BJ (cell line): ENCODE measurements at regions of chr11 and their contacts with region 1.

Region 1: DNA sequence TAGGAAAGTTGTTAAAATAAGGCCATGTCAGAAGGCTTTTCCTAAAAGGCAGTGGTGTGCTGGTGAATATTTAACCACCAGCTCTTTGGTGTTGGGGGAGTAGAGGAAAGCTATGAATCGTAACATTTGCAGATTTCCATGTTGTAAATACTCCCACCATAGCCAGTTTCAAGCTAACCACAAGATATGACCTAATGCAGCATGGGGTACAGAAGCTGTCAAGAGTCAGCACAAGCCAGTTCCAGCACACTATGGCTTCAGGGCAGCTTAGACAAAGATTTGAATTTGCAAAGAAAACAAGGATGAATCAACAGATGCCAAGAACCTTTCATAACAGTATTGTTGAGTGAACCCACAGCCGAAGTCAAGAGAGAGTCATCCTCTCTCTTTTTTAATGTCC is 40.0 kb downstream of the COMMD9 start:
- DNase-seq: peak; percentile 64
- H3K4me3 ChIP-seq: no peak overlapping the region
- H3K27me3 ChIP-seq: peaks cover 14% of the 10 kb centered on the region
- CTCF ChIP-seq: no peak

Region 2: DNA sequence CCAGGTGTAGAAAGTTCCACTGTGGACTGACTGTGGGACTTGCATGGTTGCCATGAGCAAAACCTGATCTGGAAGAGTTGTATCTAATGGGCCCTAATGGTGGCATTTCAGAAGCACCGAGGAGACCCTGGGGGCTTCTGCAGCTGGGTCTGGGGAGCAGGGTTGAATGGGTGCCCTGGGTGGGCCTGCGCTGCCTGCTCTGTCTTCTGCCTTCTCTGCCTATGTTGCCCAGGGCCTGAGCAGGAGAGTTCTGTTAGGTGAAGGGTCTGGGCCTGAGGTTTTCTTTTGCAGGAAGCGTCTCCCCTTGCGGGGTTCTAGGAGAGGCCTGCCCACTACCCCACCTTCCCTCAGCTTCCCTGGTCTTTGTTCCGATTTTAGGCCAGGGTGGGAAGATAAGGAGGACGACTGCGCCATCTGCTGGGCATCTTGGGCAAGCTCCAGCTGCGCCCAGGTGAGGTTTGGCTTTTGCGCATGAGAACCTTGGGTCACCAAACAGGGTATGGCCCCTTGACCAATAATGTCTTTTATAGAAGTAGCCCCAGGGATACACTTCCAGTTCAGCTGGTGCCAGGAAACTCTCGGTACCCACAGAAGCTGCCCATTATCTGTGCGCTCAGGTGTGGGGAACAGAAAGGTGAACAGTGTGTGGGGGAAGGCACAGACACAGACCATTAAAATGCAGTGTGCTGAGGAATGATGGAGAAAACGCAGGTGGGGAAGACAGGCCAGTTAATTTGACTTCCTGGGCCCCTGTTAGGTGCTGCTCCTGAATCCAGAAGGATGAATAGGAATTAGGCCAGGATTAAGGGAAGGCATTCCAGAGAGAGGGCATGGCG is 16.8 kb after region 1 on chr11:
- CTCF ChIA-PET with region 1: interaction called, 22 read pairs
- POLR2A ChIA-PET with region 1: no interaction called
- DNase-seq: no peak
- H3K4me3 ChIP-seq: no peak overlapping the region
- H3K27me3 ChIP-seq: peaks cover 2% of the 10 kb centered on the region; the same call in 1 of the 2 replicates
- CTCF ChIP-seq: peak; percentile 87

Region 3: GRCh38 chr11:36345084-36345511 is 95.9 kb after region 1 on chr11:
- CTCF ChIA-PET with region 1: no interaction called
- POLR2A ChIA-PET with region 1: no interaction called
- DNase-seq: no peak
- H3K4me3 ChIP-seq: no peak overlapping the region
- H3K27me3 ChIP-seq: peaks cover 1% of the 10 kb centered on the region
- CTCF ChIP-seq: no peak